ENCODE measurements at regions of chr3 and their contacts with region 1.

Region 1: DNA sequence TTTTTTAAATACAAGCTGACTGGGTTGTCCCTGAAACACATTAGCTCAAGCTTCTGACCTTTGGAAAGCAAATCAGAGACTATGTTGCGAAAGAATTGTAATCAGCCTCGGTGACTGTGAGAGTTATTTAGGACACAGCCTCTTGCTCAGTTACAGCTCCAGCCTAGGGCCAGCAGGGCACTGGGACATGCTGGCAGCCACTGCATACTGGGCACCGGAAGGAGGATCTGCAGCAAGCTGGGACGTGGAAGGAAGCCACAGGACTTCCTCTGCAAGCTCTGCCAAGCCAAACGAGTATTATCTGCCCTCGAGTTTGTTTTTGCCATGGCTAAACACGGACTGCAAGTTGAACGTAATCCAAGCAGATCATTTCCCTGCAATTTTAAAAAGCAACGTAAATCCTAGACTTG is 24.4 kb upstream of the COPG1 start:
- DNase-seq: peak; percentile 87 to 95 (median 89)
- ATAC-seq: peak; percentile 94 to 97 (median 96)
- H3K4me3 ChIP-seq: peak overlapping the region in 9 of 12 donors; percentile 4 to 44 (median 29)
- H3K27ac ChIP-seq: peak overlapping the region; percentile 75 to 93 (median 86)
- H3K4me1 ChIP-seq: peaks cover 8 to 62% (median 49%) of the 10 kb centered on the region in 12 donors
- H3K27me3 ChIP-seq: no peaks in the 10 kb centered on the region
- CTCF ChIP-seq: no peak
- POLR2A ChIP-seq: no peak

Region 2: GRCh38 chr3:129068291-129068886 is 156.6 kb before region 1 on chr3:
- intact Hi-C with region 1: no loop called
- DNase-seq: peak in 3 of 5 donors; percentile 27 to 69 (median 32)
- ATAC-seq: peak in 3 of 4 donors; percentile 36 to 57 (median 48)
- H3K4me3 ChIP-seq: peak overlapping the region in 11 of 12 donors; percentile 18 to 58 (median 45)
- H3K27ac ChIP-seq: peak overlapping the region in 2 of 12 donors; percentile 4 to 47
- H3K4me1 ChIP-seq: peaks cover 0 to 9% (median 3%) of the 10 kb centered on the region in 12 donors
- H3K27me3 ChIP-seq: no peaks in the 10 kb centered on the region
- CTCF ChIP-seq: no peak
- POLR2A ChIP-seq: peak in 1 of 2 donors; percentile 14

Region 3: DNA sequence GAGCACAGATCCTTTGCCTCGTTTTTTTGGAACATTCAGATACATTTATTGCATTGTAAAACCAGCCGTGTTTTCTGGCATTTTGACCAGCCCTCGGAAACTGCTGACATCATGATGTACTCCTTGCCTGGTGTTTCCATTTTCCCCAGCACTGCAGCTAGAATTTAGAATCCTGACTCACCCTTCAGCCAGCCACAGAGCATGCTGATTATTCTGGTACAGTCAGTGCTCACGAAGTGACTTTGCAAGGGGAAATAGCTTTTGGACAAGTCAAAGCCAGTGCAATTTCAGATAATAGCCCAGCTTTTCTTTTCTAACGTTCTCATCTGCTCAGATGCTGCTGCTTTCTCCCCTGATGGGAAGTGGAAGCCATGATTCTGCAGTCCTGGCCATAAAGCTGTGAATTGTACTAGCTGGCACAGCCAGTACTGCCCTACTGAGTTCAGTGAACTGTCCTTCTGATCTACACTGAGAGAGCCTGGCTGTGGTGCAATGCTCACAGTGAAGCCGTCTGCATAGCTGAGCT is 29.2 kb before region 1 on chr3:
- intact Hi-C with region 1: loop called in 2 of 10 experiments (anchors 2 kb)
- DNase-seq: peak in 4 of 5 donors; percentile 63 to 78 (median 64)
- ATAC-seq: peak; percentile 97
- H3K4me3 ChIP-seq: peak overlapping the region in 1 of 12 donors; percentile 10
- H3K27ac ChIP-seq: peak overlapping the region; percentile 78 to 95 (median 88)
- H3K4me1 ChIP-seq: peaks cover 12 to 39% (median 29%) of the 10 kb centered on the region in 12 donors
- H3K27me3 ChIP-seq: no peaks in the 10 kb centered on the region
- CTCF ChIP-seq: no peak
- POLR2A ChIP-seq: peak in 1 of 2 donors; percentile 25

Measured in heart left ventricle (tissue), 16 donors.